Right ventricle myocardium superior (tissue), 1 donor: ENCODE measurements at regions of chrX and their contacts with region 1.

Region 1: GRCh38 chrX:20252381-20253231 is 14.1 kb downstream of the RPS6KA3 start:
- DNase-seq: peak; percentile 66
- ATAC-seq: peak; percentile 39

Region 2: DNA sequence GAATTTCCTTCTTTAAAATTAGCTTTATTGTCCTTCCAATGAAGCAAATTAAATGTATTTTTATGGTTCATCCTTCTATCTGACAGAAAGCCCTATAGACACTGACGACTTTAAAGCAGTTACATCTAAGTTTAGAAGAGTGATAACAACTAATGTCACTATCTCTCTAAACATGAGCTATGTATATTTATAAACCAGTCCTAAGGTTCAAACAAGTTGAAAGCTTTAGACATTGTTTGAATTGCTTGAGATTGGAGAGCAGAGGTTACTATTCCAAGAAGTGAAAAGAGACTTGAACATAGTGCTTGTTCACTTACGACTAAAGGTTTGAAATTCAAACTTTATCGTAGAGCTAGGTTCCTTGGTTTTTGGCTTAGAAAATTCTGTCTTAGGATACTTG is 80.7 kb before region 1 on chrX:
- intact Hi-C with region 1: no loop called
- DNase-seq: no peak
- ATAC-seq: peak; percentile 63

Region 3: DNA sequence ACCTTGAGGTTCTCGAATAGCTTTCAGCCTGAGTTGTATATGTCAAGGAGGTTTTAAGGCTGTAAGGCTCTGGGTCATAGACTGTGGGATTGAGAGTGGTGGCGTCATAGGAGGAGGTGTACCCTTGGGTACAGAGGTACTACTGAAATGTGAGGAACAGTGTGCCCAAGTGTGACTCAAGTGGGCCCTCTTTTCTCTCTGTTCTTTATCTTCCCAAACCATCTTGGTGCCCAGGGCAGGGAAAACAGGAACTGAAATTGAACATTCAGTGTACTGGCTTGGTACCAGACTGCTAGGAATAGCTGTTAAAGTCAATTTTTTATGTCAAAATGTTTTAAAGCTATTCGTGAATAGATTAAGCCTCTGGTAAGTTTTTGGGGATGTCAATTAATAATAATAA is 150.3 kb after region 1 on chrX:
- intact Hi-C with region 1: no loop called
- DNase-seq: no peak
- ATAC-seq: no peak

Region 4: GRCh38 chrX:20442597-20442996 is 190.0 kb after region 1 on chrX:
- intact Hi-C with region 1: loop called (anchors 5 kb)
- DNase-seq: peak; percentile 88
- ATAC-seq: peak; percentile 91